Esophagus squamous epithelium (tissue), 5 donors: ENCODE measurements at regions of chr3 and their contacts with region 1.

Region 1: GRCh38 chr3:137013955-137014688 is 56.3 kb downstream of the IL20RB start:
- DNase-seq: peak; percentile 24
- H3K4me3 ChIP-seq: peak overlapping the region; percentile 21 to 64 (median 50)
- H3K27ac ChIP-seq: peak overlapping the region; percentile 67 to 87 (median 78)
- H3K4me1 ChIP-seq: peaks cover 0 to 29% (median 6%) of the 10 kb centered on the region in 3 donors
- H3K27me3 ChIP-seq: no peaks in the 10 kb centered on the region
- CTCF ChIP-seq: peak; percentile 74 to 97 (median 94)
- POLR2A ChIP-seq: no peak

Region 2: GRCh38 chr3:136075218-136075808 is 938.8 kb before region 1 on chr3:
- intact Hi-C with region 1: loop called (anchors 10 kb)
- DNase-seq: no peak
- H3K4me3 ChIP-seq: no peak overlapping the region
- H3K27ac ChIP-seq: no peak overlapping the region
- H3K4me1 ChIP-seq: peaks cover 0 to 15% (median 0%) of the 10 kb centered on the region in 3 donors
- H3K27me3 ChIP-seq: no peaks in the 10 kb centered on the region
- CTCF ChIP-seq: peak; percentile 82 to 96 (median 94)
- POLR2A ChIP-seq: no peak

Region 3: GRCh38 chr3:136404056-136404455 is 610.1 kb before region 1 on chr3:
- intact Hi-C with region 1: loop called (anchors 10 kb)
- DNase-seq: no peak
- H3K4me3 ChIP-seq: no peak overlapping the region
- H3K27ac ChIP-seq: no peak overlapping the region
- H3K4me1 ChIP-seq: no peaks in the 10 kb centered on the region
- H3K27me3 ChIP-seq: no peaks in the 10 kb centered on the region
- CTCF ChIP-seq: no peak
- POLR2A ChIP-seq: no peak

Region 4: DNA sequence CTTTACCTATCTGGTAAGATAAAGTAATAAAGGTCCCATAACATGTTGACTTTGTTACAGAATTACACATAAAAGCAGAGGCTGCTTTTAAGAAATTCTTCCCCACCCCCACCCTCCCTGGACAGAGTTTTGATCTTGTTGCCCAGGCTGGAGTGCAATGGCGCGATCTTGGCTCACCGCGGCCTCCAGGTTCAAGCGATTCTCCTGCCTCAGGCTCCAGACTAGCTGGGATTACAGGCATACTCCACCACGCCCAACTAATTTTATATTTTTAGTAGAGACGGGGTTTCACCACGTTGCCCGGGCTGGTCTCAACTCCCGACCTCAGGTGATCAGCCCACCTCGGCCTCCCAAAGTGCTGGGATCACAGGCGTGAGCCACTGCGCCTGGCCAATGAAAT is 258.4 kb before region 1 on chr3:
- intact Hi-C with region 1: loop called (anchors 5 kb)
- DNase-seq: no peak
- H3K4me3 ChIP-seq: no peak overlapping the region
- H3K27ac ChIP-seq: no peak overlapping the region
- H3K4me1 ChIP-seq: peaks cover 0 to 22% (median 9%) of the 10 kb centered on the region in 3 donors
- H3K27me3 ChIP-seq: no peaks in the 10 kb centered on the region
- CTCF ChIP-seq: no peak
- POLR2A ChIP-seq: no peak